Naive thymus-derived CD4-positive, alpha-beta T cell (primary cell): ENCODE measurements at regions of chr4 and their contacts with region 1.

Region 1: DNA sequence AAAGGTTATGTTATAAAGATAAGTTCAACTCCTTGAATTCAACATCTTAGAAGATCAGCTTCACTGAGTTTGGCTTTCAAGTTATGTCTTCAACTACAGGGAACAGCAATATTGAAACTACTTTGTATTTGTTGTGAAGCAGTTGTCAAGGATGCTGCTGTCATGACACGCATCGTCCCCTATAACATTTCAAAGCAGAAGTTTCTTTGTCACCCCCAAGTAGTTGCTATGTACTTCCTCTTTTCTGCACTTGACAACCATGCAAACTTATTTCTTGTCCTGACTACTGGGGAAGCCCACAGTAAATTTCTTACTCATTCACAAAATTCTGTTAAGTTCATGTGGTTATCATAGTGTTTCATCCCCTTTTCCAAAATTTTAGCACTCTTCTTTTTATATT is 14.3 kb downstream of the ANTXR2 start:
- DNase-seq: peak in 7 of 9 donors; percentile 53 to 89 (median 84)
- ATAC-seq: peak; percentile 96
- H3K4me3 ChIP-seq: no peak overlapping the region
- H3K4me3 Mint-ChIP-seq: peak overlapping the region; percentile 54 to 86 (median 74)
- H3K27ac ChIP-seq: peak overlapping the region; percentile 86
- H3K27ac Mint-ChIP-seq: peak overlapping the region; percentile 91 to 99 (median 96)
- H3K4me1 ChIP-seq: peaks cover 10 to 13% of the 10 kb centered on the region in 2 donors
- H3K4me1 Mint-ChIP-seq: peaks cover 12 to 50% (median 42%) of the 10 kb centered on the region in 7 donors
- H3K27me3 ChIP-seq: no peaks in the 10 kb centered on the region
- H3K27me3 Mint-ChIP-seq: no peaks in the 10 kb centered on the region

Region 2: DNA sequence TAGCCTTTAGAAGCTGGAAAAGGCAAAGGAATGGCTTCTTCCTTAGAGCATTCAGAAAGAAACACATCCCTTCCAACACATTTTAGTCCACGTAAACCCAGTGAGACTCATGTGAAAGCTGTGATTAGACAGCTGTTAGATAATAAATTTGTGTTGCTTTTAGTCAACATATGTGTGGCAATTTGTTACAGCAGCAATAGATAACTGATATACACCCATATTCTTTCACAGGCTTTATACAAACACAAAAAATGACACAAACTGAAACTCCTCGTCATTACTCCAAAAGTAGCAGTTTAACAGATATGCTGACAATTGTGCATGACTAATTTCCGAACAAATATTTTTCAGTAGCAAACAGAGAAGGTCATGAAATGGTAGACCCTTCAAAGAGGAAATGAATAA is 51.0 kb before region 1 on chr4:
- CTCF ChIA-PET with region 1: no interaction called
- POLR2A ChIA-PET with region 1: no interaction called
- intact Hi-C with region 1: loop called in 1 of 2 experiments (anchors 2 kb)
- DNase-seq: no peak
- ATAC-seq: no peak
- H3K4me3 ChIP-seq: no peak overlapping the region
- H3K4me3 Mint-ChIP-seq: peak overlapping the region in 1 of 10 donors; percentile 43
- H3K27ac ChIP-seq: no peak overlapping the region
- H3K27ac Mint-ChIP-seq: peak overlapping the region in 3 of 9 donors; percentile 5 to 86 (median 56)
- H3K4me1 ChIP-seq: peaks cover 12 to 22% of the 10 kb centered on the region in 2 donors
- H3K4me1 Mint-ChIP-seq: peaks cover 19 to 59% (median 44%) of the 10 kb centered on the region in 7 donors
- H3K27me3 ChIP-seq: no peaks in the 10 kb centered on the region
- H3K27me3 Mint-ChIP-seq: no peaks in the 10 kb centered on the region

Region 3: GRCh38 chr4:80017125-80017854 is 41.5 kb before region 1 on chr4:
- CTCF ChIA-PET with region 1: no interaction called
- POLR2A ChIA-PET with region 1: no interaction called
- intact Hi-C with region 1: loop called in 1 of 2 experiments (anchors 2 kb)
- DNase-seq: no peak
- ATAC-seq: peak; percentile 57
- H3K4me3 ChIP-seq: no peak overlapping the region
- H3K4me3 Mint-ChIP-seq: no peak overlapping the region
- H3K27ac ChIP-seq: no peak overlapping the region
- H3K27ac Mint-ChIP-seq: no peak overlapping the region
- H3K4me1 ChIP-seq: peaks cover 0 to 13% of the 10 kb centered on the region in 2 donors
- H3K4me1 Mint-ChIP-seq: peaks cover 0 to 10% (median 0%) of the 10 kb centered on the region in 7 donors
- H3K27me3 ChIP-seq: no peaks in the 10 kb centered on the region
- H3K27me3 Mint-ChIP-seq: no peaks in the 10 kb centered on the region

Region 4: DNA sequence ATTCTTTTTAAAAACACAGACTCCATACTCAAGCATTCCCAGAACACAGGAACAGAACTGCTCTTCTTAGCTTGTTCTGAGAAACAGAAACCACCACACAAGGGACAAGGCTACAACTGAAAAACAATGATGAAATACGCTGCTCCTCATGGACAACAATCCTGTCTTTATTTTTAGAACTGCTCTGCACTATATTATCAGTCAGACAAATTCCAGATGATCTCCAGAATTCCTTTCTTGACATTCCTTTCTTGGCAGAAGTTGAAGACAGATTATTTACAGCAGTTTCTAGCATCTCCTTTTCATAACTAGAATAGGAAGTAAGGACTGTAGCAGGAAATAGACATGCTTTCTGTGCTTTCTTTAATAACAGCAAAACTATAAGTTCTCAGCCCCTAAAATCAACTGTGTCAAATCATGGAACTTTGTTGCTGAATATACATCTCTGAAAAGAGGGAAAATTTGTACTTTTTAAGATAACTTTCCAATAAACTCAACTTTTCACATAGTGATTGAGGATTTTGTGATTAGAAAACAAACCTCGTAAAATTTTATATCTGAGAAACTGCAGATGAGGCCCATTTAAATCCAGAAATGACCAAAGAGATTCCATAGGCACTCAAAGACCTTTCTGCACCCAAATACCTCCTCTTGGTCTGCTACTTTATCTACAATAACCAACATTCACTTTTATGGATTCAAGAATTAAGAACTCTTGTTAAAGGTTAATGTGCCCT is 21.6 kb before region 1 on chr4:
- CTCF ChIA-PET with region 1: no interaction called
- POLR2A ChIA-PET with region 1: interaction called, 3 read pairs
- intact Hi-C with region 1: loop called in 1 of 2 experiments (anchors 1 kb)
- DNase-seq: peak in 1 of 9 donors; percentile 5
- ATAC-seq: peak; percentile 20
- H3K4me3 ChIP-seq: no peak overlapping the region
- H3K4me3 Mint-ChIP-seq: peak overlapping the region; percentile 47 to 89 (median 68)
- H3K27ac ChIP-seq: peak overlapping the region; percentile 50
- H3K27ac Mint-ChIP-seq: peak overlapping the region; percentile 57 to 96 (median 82)
- H3K4me1 ChIP-seq: peaks cover 0 to 7% of the 10 kb centered on the region in 2 donors
- H3K4me1 Mint-ChIP-seq: peaks cover 6 to 40% (median 35%) of the 10 kb centered on the region in 7 donors
- H3K27me3 ChIP-seq: no peaks in the 10 kb centered on the region
- H3K27me3 Mint-ChIP-seq: no peaks in the 10 kb centered on the region

Region 5: DNA sequence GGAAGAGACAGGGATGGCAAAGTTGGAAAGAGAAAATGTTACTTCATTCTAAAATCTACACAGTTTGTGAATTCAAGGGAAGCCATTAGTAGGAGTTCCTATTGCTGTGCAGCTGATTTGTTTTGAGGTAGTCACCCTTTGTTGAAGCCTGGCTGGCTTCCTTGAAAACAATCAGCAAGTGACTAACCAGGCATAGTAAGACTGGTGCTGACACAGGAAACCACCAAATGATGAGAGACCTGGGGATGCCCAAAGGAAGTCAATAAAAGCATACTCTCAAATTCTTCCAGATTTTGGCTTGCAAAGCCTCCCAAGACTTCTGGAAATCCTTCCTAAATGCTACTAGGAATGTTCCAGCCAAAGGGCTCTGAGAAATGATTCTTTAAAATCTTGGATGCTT is 114.7 kb after region 1 on chr4:
- CTCF ChIA-PET with region 1: no interaction called
- POLR2A ChIA-PET with region 1: no interaction called
- intact Hi-C with region 1: loop called in 1 of 2 experiments (anchors 1 kb)
- DNase-seq: peak in 8 of 9 donors; percentile 42 to 78 (median 72)
- ATAC-seq: peak; percentile 98
- H3K4me3 ChIP-seq: peak overlapping the region; percentile 26
- H3K4me3 Mint-ChIP-seq: peak overlapping the region; percentile 66 to 84 (median 76)
- H3K27ac ChIP-seq: peak overlapping the region; percentile 75
- H3K27ac Mint-ChIP-seq: peak overlapping the region; percentile 92 to 99 (median 96)
- H3K4me1 ChIP-seq: peaks cover 33 to 40% of the 10 kb centered on the region in 2 donors
- H3K4me1 Mint-ChIP-seq: peaks cover 33 to 72% (median 60%) of the 10 kb centered on the region in 7 donors
- H3K27me3 ChIP-seq: no peaks in the 10 kb centered on the region
- H3K27me3 Mint-ChIP-seq: peaks cover 0 to 2% (median 0%) of the 10 kb centered on the region in 5 donors